ENCODE measurements at regions of chr6 and their contacts with region 1.

Region 1: DNA sequence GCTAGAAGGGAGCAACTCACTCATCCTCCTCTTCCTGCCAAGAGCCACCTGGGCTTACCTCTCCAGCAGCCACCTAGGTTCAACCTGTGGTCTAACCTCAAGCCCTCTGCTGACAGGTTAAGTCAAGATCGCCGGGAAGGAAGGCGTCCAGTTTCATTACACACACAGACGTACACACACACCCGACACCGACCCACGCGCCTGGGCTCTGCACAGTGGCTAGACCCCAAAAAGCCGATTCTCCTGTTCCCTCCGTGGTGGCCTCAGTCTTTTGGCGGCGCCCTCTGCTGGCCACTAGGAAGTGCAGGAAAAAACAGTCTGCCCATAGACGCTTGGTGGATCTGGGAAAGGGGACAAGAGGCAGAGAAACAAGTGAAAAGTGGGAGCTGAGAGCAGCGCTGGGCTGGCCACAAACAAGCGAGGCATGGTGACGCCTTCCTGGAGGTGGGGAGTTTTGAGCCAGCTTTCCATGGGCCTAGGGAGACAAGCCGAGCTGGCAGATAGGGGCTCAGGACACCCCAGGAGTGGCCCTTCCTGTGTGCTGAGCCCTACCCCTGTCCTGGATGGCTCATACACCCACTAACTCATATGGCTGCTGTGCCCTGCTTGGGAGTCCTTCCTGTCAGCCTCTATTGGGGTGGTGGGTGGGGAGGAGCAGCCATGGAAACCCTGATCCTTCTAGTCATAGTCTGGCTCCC is 52.7 kb downstream of the MRPL14 start:
- DNase-seq: peak; percentile 78
- H3K4me3 ChIP-seq: no peak overlapping the region
- H3K27ac ChIP-seq: peak overlapping the region; percentile 62 to 91
- H3K4me1 ChIP-seq: peaks cover 27% of the 10 kb centered on the region
- H3K27me3 ChIP-seq: no peaks in the 10 kb centered on the region
- CTCF ChIP-seq: peak; percentile 81 to 91 (median 90)
- POLR2A ChIP-seq: no peak

Region 2: DNA sequence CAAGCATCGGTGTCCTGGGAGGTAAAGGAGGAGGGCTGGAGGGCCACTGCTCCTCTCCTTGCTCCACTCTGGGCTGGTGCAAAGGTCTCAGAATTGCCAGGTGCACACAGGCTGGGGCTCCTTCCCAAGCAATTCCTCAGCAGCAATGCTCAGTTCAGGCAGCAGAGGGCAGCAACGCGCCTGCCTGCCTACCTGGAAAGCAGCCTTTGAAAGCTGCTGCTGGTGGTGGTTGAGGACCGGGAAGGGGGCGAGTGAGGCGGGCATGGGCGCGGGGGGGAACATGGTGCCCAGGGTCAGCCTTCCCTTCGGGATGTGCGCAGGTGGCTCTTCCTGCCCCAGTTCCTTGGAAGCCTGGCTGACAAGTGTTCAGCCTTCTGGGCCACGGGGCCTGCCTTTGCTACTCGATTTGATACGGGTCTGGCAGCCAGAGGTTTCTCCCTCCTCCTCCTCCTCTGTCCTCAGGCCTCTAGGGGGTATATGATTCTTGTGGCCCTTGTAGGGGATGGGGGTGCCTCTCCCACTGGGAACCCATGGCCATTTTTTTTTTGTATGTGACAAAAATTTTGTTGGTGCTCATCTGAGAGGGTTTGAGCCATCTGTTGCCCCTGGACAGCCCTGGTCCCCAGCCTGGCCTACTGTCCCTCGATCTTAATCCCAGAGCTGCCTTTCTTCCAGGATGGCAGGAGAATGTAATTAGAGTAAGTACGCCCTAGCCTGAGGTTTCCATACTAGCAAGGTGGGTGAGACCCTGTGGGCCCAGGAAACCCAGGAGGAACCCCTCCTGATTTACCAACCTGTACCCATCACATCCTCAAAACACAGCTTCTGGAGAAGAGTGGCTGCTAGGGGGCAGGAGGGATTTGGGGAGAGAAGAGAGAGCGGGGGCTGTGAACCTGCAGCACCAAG is 407.1 kb before region 1 on chr6:
- intact Hi-C with region 1: loop called (anchors 10 kb)
- DNase-seq: peak; percentile 85
- H3K4me3 ChIP-seq: no peak overlapping the region
- H3K27ac ChIP-seq: no peak overlapping the region
- H3K4me1 ChIP-seq: peaks cover 35% of the 10 kb centered on the region
- H3K27me3 ChIP-seq: no peaks in the 10 kb centered on the region
- CTCF ChIP-seq: peak; percentile 57 to 86 (median 85)
- POLR2A ChIP-seq: no peak